Psoas muscle (tissue), 8 donors: ENCODE measurements at regions of chr22 and their contacts with region 1.

Region 1: DNA sequence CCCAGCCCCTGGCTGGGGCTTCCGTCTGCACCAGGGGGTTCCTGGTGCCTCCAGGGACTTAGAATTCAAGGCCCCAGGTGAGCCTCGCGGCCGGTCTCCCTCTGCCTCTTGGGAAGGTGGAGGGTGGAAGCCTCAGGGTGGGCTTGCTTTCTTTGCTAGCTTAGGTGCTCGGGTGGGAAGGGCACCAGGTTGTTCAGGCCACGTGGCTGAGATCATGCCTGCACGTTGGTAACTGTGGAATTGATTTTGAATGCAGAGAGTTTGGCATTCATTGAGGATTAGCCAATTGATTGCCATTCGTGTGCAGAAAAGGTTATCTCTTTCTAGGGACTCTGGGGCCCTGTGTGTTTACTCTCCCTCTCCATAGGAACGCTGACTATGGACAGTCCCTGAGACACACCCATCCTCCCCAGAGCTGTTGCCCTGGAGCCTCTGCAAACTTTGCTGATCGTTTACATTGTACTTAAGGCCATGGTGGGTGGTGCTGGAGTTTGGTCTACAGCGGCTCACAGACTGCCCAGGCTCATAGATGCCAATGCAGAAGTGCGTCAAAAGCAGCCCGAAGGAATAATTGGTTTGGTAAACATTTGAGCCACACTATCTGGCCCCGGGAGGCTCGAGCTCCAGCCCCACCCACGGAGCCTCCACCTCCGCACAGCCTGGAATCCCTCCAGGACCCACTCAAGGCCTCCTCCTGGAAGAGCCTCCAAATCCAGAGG is 1457.7 kb downstream of the BRD1 start:
- DNase-seq: no peak
- ATAC-seq: no peak
- H3K4me3 ChIP-seq: no peak overlapping the region
- H3K27ac ChIP-seq: no peak overlapping the region
- H3K4me1 ChIP-seq: no peaks in the 10 kb centered on the region
- H3K27me3 ChIP-seq: peaks cover 0 to 5% (median 0%) of the 10 kb centered on the region in 3 donors
- CTCF ChIP-seq: no peak

Region 2: GRCh38 chr22:48423479-48423911 is 53.5 kb after region 1 on chr22:
- intact Hi-C with region 1: loop called in 1 of 2 experiments (anchors 10 kb)
- DNase-seq: no peak
- ATAC-seq: no peak
- H3K4me3 ChIP-seq: no peak overlapping the region
- H3K27ac ChIP-seq: no peak overlapping the region
- H3K4me1 ChIP-seq: no peaks in the 10 kb centered on the region
- H3K27me3 ChIP-seq: peaks cover 0 to 2% (median 0%) of the 10 kb centered on the region in 3 donors
- CTCF ChIP-seq: no peak

Region 3: GRCh38 chr22:48492366-48493320 is 122.7 kb after region 1 on chr22:
- intact Hi-C with region 1: no loop called
- DNase-seq: peak; percentile 55 to 66
- ATAC-seq: peak; percentile 61 to 87 (median 75)
- H3K4me3 ChIP-seq: no peak overlapping the region
- H3K27ac ChIP-seq: no peak overlapping the region
- H3K4me1 ChIP-seq: no peaks in the 10 kb centered on the region
- H3K27me3 ChIP-seq: peaks cover 0 to 42% (median 12%) of the 10 kb centered on the region in 3 donors
- CTCF ChIP-seq: peak; percentile 57

Region 4: DNA sequence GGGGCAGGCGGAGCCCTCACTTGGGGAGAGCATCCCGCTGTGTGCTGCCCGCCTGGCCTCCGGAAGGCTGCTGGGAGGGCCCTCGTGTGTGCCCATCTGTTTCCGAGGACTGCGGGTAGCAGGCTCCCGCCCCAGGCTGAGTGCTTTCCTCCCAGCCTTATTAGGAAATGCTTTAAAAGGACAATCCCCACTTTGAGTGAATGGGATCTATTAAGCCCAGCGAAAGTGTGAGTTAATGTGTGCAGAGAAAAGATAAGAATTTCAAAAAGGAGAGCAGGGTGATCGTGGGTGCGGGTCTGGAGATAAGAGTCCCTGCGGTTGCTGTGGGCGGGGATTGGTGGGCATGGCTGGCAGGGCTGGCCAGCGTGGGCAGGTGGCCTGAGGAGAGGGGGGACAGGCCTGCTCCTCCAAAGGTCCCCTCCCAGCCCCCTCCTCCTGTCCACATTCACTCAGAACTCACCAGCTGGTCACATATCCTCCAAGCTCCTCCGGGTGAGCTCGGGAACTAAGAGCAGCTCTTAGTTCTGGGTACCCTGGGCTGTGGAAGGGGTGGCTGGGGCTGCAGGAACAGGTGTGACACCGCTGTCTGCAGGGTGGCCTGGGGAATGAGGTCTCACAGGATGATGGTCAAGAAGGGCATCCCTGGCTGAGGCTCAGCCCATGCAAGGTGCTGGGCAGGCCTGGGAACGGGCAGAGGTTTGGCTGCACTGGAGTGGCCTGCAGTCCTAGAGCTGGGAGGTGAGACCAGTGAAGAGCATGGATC is 197.4 kb after region 1 on chr22:
- intact Hi-C with region 1: no loop called
- DNase-seq: peak in 1 of 2 donors; percentile 23
- ATAC-seq: no peak
- H3K4me3 ChIP-seq: no peak overlapping the region
- H3K27ac ChIP-seq: no peak overlapping the region
- H3K4me1 ChIP-seq: no peaks in the 10 kb centered on the region
- H3K27me3 ChIP-seq: peaks cover 0 to 4% (median 0%) of the 10 kb centered on the region in 3 donors
- CTCF ChIP-seq: no peak